Activated B cell treated with CpG ODN at 0.5 μM for 24 hours (primary cell): ENCODE measurements at regions of chr4 and their contacts with region 1.

Region 1: GRCh38 chr4:147866532-147867271 is 134.8 kb downstream of the ARHGAP10 start:
- DNase-seq: peak; percentile 61
- ATAC-seq: peak; percentile 95
- H3K4me3 Mint-ChIP-seq: no peak overlapping the region
- H3K27ac Mint-ChIP-seq: no peak overlapping the region
- H3K4me1 Mint-ChIP-seq: no peaks in the 10 kb centered on the region
- H3K27me3 Mint-ChIP-seq: no peaks in the 10 kb centered on the region
- CTCF ChIP-seq: peak; percentile 99

Region 2: GRCh38 chr4:147518846-147519767 is 347.6 kb before region 1 on chr4:
- CTCF ChIA-PET with region 1: interaction called, 17 read pairs
- POLR2A ChIA-PET with region 1: no interaction called
- intact Hi-C with region 1: loop called (anchors 1 kb)
- DNase-seq: no peak
- ATAC-seq: no peak
- H3K4me3 Mint-ChIP-seq: no peak overlapping the region
- H3K27ac Mint-ChIP-seq: no peak overlapping the region
- H3K4me1 Mint-ChIP-seq: no peaks in the 10 kb centered on the region
- H3K27me3 Mint-ChIP-seq: peaks cover 4% of the 10 kb centered on the region
- CTCF ChIP-seq: no peak

Region 3: DNA sequence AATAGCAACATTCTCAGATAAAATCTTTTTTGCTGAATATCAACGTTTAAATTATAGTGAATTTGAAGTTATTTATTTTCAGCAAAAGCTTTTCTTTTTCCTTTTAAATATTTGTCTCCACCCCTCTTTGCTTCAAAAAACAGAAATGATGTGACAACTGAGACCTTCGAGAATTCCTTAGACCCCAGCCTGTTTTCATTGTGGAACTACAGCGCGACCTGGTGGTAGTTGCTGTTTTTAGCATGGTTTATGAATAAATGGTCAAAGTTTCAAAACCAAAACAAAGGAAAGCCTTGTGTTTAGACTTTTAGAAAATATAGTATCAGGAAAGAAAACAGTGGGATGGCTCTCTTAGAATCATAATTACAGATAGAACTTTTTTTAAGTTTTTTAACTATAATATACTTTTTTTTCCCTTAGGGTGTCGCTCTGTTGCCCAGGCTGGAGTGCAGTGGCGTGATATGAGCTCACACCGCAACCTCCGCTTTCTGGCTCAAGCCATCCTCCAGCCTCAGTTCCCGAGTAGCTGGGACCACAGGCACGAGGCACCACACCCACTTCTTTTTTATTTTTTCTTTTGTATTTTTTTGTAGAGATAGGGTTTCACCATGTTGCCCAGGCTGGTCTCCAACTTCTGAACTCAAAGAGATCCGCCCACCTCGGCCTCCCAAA is 276.3 kb before region 1 on chr4:
- CTCF ChIA-PET with region 1: no interaction called
- POLR2A ChIA-PET with region 1: no interaction called
- intact Hi-C with region 1: loop called (anchors 5 kb)
- DNase-seq: no peak
- ATAC-seq: no peak
- H3K4me3 Mint-ChIP-seq: no peak overlapping the region
- H3K27ac Mint-ChIP-seq: no peak overlapping the region
- H3K4me1 Mint-ChIP-seq: no peaks in the 10 kb centered on the region
- H3K27me3 Mint-ChIP-seq: peaks cover 18% of the 10 kb centered on the region
- CTCF ChIP-seq: no peak

Region 4: GRCh38 chr4:147683717-147684700 is 182.7 kb before region 1 on chr4 and contains the start of gene PRMT9:
- CTCF ChIA-PET with region 1: interaction called, 3 read pairs
- POLR2A ChIA-PET with region 1: interaction called, 11 read pairs
- intact Hi-C with region 1: no loop called
- DNase-seq: peak; percentile 83
- ATAC-seq: peak; percentile 97
- H3K4me3 Mint-ChIP-seq: peak within 1 kb of the TSS; percentile 97
- H3K27ac Mint-ChIP-seq: peak within 1 kb of the TSS; percentile 94
- H3K4me1 Mint-ChIP-seq: peaks cover 23% of the 10 kb centered on the region
- H3K27me3 Mint-ChIP-seq: peaks cover 6% of the 10 kb centered on the region
- CTCF ChIP-seq: no peak
- total RNA-seq, gene PRMT9: 7.4 and 8.9 TPM in 2 replicates

Region 5: GRCh38 chr4:147707865-147708672 is 158.6 kb before region 1 on chr4:
- CTCF ChIA-PET with region 1: interaction called, 14 read pairs
- POLR2A ChIA-PET with region 1: no interaction called
- intact Hi-C with region 1: loop called (anchors 1 kb)
- DNase-seq: no peak
- ATAC-seq: no peak
- H3K4me3 Mint-ChIP-seq: no peak overlapping the region
- H3K27ac Mint-ChIP-seq: no peak overlapping the region
- H3K4me1 Mint-ChIP-seq: no peaks in the 10 kb centered on the region
- H3K27me3 Mint-ChIP-seq: no peaks in the 10 kb centered on the region
- CTCF ChIP-seq: peak; percentile 97

Region 6: GRCh38 chr4:147846318-147847155 is 20.2 kb before region 1 on chr4:
- CTCF ChIA-PET with region 1: interaction called, 10 read pairs
- POLR2A ChIA-PET with region 1: no interaction called
- intact Hi-C with region 1: no loop called
- DNase-seq: no peak
- ATAC-seq: no peak
- H3K4me3 Mint-ChIP-seq: no peak overlapping the region
- H3K27ac Mint-ChIP-seq: no peak overlapping the region
- H3K4me1 Mint-ChIP-seq: no peaks in the 10 kb centered on the region
- H3K27me3 Mint-ChIP-seq: peaks cover 3% of the 10 kb centered on the region
- CTCF ChIP-seq: no peak

Region 7: GRCh38 chr4:147884536-147884935 is 17.8 kb after region 1 on chr4:
- CTCF ChIA-PET with region 1: interaction called, 17 read pairs
- POLR2A ChIA-PET with region 1: no interaction called
- intact Hi-C with region 1: no loop called
- DNase-seq: no peak
- ATAC-seq: no peak
- H3K4me3 Mint-ChIP-seq: no peak overlapping the region
- H3K27ac Mint-ChIP-seq: no peak overlapping the region
- H3K4me1 Mint-ChIP-seq: no peaks in the 10 kb centered on the region
- H3K27me3 Mint-ChIP-seq: no peaks in the 10 kb centered on the region
- CTCF ChIP-seq: no peak

Region 8: GRCh38 chr4:148300877-148301276 is 434.2 kb after region 1 on chr4:
- CTCF ChIA-PET with region 1: no interaction called
- POLR2A ChIA-PET with region 1: no interaction called
- intact Hi-C with region 1: no loop called
- DNase-seq: no peak
- ATAC-seq: no peak
- H3K4me3 Mint-ChIP-seq: no peak overlapping the region
- H3K27ac Mint-ChIP-seq: no peak overlapping the region
- H3K4me1 Mint-ChIP-seq: no peaks in the 10 kb centered on the region
- H3K27me3 Mint-ChIP-seq: no peaks in the 10 kb centered on the region
- CTCF ChIP-seq: no peak